ENCODE measurements at regions of chr1 and their contacts with region 1.

Region 1: DNA sequence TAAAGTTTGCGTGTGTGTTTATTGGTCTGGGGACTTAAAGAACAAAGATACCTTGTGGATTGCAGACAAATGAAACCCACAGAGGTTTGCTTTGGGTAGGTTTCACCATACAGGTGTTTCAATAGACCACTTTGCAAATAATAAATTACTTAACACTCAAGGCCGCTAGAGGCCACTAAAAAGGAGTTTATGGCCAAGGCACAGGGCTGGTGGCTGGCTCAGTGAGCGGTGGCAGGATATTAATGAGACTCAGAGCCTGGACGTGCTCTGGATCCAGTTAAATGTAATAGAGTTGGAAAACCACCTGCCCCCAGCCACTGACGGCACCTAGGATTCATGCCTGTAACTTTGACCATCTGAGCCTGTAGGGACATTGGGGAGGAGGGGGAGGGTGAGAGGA is 44.5 kb downstream of the LRRC38 start:
- DNase-seq: peak; percentile 23 to 67
- ATAC-seq: peak; percentile 85 to 92 (median 88)
- H3K4me3 ChIP-seq: no peak overlapping the region
- H3K27ac ChIP-seq: peak overlapping the region; percentile 30
- H3K4me1 ChIP-seq: no peaks in the 10 kb centered on the region
- H3K27me3 ChIP-seq: no peaks in the 10 kb centered on the region
- CTCF ChIP-seq: peak; percentile 43

Region 2: DNA sequence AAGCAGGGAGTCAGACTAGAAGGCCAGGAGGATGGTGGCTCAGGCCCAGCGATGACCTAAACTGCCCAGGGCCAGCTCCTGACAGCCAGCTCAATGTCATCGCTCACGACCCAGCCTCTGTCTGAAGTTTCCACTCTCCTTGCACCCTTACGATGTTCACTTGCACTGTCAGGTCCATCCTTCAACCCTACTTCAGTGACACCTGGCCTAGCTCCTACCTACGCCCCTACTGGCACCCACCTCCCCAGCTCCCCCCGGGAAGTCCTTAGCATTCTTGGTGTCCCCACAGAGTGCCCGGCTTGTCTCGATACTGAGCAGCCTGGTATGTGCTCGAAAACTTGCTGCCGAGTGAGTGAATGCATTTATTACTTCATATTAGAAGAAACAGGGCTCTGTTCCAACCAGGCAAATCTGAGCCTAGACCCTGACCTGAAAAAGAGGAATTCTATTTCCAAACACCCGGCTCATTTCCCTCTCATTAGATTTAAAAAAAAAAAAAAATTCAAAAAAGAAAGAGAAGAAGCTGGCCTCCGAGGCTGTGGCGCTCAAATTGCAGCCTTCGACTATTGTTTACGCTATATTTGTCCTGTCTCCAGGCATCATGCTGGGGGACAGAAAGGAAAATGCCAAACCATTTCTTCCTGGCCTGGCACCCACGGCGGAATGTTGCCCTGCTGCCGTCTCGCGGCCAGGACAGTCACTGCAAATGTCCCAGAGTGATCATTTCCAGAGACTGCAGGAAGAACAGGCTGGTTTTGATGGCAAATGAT is 74.3 kb after region 1 on chr1:
- intact Hi-C with region 1: loop called (anchors 5 kb)
- DNase-seq: peak; percentile 70 to 87
- ATAC-seq: peak; percentile 76 to 88 (median 80)
- H3K4me3 ChIP-seq: peak overlapping the region; percentile 28
- H3K27ac ChIP-seq: peak overlapping the region; percentile 80
- H3K4me1 ChIP-seq: peaks cover 20% of the 10 kb centered on the region
- H3K27me3 ChIP-seq: no peaks in the 10 kb centered on the region
- CTCF ChIP-seq: peak; percentile 67

Region 3: DNA sequence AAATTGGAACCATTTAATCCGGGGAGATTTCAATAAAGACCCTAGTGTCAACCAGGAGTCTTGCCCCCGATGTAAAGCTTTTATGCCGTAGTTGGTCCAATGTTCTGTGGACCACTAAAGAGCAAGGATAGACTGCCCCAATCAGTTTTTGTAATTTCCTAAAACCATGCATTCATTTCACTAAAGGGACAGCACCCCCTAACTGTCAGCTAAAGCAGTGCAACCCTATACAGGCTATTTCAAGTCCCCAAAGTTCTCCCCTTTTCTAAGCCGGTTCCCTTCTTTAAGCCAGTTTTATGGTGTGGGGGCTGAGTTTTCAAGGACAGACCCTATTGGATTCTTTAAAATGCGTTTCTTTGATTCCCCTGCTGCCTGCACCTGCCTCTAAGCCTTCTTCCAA is 101.6 kb after region 1 on chr1:
- intact Hi-C with region 1: loop called in 1 of 2 experiments (anchors 10 kb)
- DNase-seq: no peak
- ATAC-seq: peak in 2 of 4 donors; percentile 52 to 55
- H3K4me3 ChIP-seq: no peak overlapping the region
- H3K27ac ChIP-seq: no peak overlapping the region
- H3K4me1 ChIP-seq: no peaks in the 10 kb centered on the region
- H3K27me3 ChIP-seq: no peaks in the 10 kb centered on the region
- CTCF ChIP-seq: peak; percentile 53